Activated CD8-positive, alpha-beta T cell treated with anti-CD3 and anti-CD28 coated beads, Interleukin-2, amount 10 ng/mL, durations not matched to agents 7 days and 5 days (primary cell): ENCODE measurements at regions of chr1 and their contacts with region 1.

Region 1: GRCh38 chr1:157194739-157195520 is 56.7 kb upstream of the ETV3 start:
- DNase-seq: no peak
- ATAC-seq: no peak
- H3K4me3 Mint-ChIP-seq: no peak overlapping the region
- H3K27ac Mint-ChIP-seq: no peak overlapping the region
- H3K4me1 Mint-ChIP-seq: peaks cover 12% of the 10 kb centered on the region
- H3K27me3 Mint-ChIP-seq: peaks cover 35% of the 10 kb centered on the region

Region 2: DNA sequence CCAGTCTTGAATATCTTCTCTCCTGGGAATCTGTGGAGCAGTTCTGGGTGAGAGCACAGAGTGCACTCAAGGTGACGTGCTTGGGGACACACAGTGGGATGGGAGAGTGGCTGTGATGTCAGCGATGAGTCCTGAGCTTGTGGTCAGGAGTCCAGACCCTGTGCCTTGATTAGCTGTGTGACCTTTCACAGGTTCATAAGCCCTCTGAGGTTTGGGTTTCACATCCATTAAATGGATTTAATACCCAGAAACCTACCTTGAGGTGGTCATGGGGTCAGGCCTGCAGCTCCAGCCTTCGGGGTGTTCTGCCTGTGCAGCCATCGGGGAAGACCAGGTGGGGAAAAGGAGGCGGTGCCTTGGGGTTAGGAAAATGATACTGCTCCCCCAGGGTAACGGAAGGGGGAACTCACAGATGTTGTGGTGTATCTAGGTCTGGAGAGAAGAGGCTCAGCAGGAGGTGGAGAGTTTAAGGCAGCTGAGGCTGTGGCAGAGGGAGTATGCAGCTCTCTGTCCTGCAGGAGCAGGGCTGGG is 18.3 kb before region 1 on chr1:
- CTCF ChIA-PET with region 1: interaction called, 11 read pairs
- POLR2A ChIA-PET with region 1: no interaction called
- DNase-seq: no peak
- ATAC-seq: no peak
- H3K4me3 Mint-ChIP-seq: no peak overlapping the region
- H3K27ac Mint-ChIP-seq: no peak overlapping the region
- H3K4me1 Mint-ChIP-seq: peaks cover 2% of the 10 kb centered on the region
- H3K27me3 Mint-ChIP-seq: peaks cover 33% of the 10 kb centered on the region

Region 3: DNA sequence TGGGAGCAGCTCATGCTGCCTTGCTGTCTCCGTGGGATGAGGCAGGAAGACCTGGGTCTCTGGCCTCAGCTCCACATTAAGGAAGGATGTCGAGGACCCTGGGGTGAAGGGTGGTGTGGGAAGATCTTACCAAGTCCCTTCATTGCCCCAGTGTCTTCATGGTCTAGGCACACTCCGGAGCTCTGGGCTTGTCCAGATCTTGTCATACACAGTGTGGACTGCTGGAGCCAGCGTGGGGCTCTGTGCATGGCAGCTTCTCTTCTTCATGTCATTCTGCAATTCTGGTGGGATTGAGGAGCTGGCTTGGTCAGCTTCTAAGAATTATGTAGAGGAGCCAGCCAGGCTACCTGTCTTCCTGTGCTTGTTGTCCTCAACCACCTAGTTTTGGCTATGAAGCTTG is 22.6 kb after region 1 on chr1:
- CTCF ChIA-PET with region 1: no interaction called
- POLR2A ChIA-PET with region 1: no interaction called
- DNase-seq: peak; percentile 5
- ATAC-seq: no peak
- H3K4me3 Mint-ChIP-seq: no peak overlapping the region
- H3K27ac Mint-ChIP-seq: no peak overlapping the region
- H3K4me1 Mint-ChIP-seq: no peaks in the 10 kb centered on the region
- H3K27me3 Mint-ChIP-seq: peaks cover 30% of the 10 kb centered on the region

Region 4: DNA sequence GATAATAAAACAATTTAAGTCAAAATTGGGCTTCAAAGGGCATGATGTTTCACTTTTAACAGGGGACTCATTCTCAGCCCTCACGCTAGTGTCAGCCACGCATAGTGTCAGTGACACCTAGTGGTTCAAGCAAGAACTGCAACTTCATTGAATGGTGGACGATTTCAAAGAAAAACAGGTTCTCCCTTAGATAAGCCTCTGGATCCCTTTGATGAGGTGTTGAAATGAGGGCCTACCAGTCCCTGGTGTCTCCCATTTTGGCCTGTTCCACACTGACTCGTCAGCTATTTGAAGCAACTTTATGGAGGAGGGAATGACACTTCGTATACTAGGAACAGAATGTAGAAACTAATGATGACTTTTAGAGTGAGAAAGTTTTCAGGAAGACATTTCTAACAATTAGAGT is 301.2 kb after region 1 on chr1:
- CTCF ChIA-PET with region 1: interaction called, 12 read pairs
- POLR2A ChIA-PET with region 1: no interaction called
- DNase-seq: peak; percentile 65
- ATAC-seq: peak; percentile 74
- H3K4me3 Mint-ChIP-seq: no peak overlapping the region
- H3K27ac Mint-ChIP-seq: no peak overlapping the region
- H3K4me1 Mint-ChIP-seq: no peaks in the 10 kb centered on the region
- H3K27me3 Mint-ChIP-seq: peaks cover 33% of the 10 kb centered on the region